Activated CD8-positive, alpha-beta T cell treated with anti-CD3 and anti-CD28 coated beads, Interleukin-2, amount 10 ng/mL, durations not matched to agents 7 days and 5 days (primary cell): ENCODE measurements at regions of chr2 and their contacts with region 1.

Region 1: DNA sequence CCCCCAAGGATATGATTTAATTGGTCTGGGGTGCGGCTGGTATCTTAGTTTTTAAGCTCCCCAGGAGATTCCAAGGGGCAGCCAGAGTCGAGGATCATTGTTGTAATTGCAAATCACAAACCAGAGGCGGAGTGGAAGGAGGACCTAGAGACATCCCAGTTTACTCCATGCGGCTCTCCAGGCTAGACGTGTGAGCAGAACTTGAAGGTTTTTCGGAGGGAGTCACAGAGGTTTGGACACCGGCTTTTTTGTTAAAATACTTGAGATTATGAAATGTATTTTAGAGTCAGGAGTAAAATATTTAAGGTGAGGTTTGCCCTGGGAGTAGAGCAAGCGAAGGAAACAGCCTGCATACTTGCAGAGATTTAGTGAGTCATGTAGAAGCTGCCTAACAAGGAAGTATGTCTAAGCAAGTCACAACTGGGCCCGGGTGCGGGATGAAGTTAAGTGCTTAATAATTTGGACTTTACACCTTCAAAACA is 39.5 kb downstream of the TGOLN2 start:
- DNase-seq: no peak
- ATAC-seq: no peak
- H3K4me3 Mint-ChIP-seq: no peak overlapping the region
- H3K27ac Mint-ChIP-seq: no peak overlapping the region
- H3K4me1 Mint-ChIP-seq: peaks cover 21% of the 10 kb centered on the region
- H3K27me3 Mint-ChIP-seq: no peaks in the 10 kb centered on the region

Region 2: DNA sequence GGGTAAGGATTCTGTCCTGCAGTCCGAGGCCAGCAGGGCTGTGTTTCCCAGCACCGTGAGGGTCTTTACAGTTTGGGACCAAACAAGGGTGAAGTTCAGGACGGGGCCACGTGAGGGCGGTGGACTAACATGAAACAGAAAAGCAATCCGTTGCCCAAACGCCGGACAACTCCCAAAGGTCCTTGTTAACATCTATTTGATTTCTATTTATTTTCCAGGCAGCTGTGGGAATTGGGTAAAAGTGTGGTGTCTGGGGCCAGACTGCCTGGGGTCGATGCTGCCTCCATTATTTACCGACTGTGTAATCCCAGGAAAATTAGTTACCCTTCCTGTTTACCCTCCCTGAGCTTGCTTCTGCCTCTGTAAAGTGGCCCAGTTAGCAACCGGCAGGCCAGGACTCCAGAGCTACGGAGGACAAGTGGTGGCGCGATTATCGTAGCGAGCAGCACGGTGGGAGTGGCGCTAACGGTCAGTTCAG is 221.4 kb before region 1 on chr2:
- CTCF ChIA-PET with region 1: interaction called, 25 read pairs
- POLR2A ChIA-PET with region 1: no interaction called
- DNase-seq: peak; percentile 63
- ATAC-seq: peak; percentile 53
- H3K4me3 Mint-ChIP-seq: no peak overlapping the region
- H3K27ac Mint-ChIP-seq: no peak overlapping the region
- H3K4me1 Mint-ChIP-seq: no peaks in the 10 kb centered on the region
- H3K27me3 Mint-ChIP-seq: peaks cover 25% of the 10 kb centered on the region

Region 3: GRCh38 chr2:85266146-85267041 is 21.9 kb before region 1 on chr2:
- CTCF ChIA-PET with region 1: interaction called, 26 read pairs
- POLR2A ChIA-PET with region 1: no interaction called
- DNase-seq: peak; percentile 80
- ATAC-seq: peak; percentile 81
- H3K4me3 Mint-ChIP-seq: no peak overlapping the region
- H3K27ac Mint-ChIP-seq: no peak overlapping the region
- H3K4me1 Mint-ChIP-seq: no peaks in the 10 kb centered on the region
- H3K27me3 Mint-ChIP-seq: peaks cover 10% of the 10 kb centered on the region

Region 4: GRCh38 chr2:85273738-85274731 is 14.2 kb before region 1 on chr2:
- CTCF ChIA-PET with region 1: interaction called, 12 read pairs
- POLR2A ChIA-PET with region 1: interaction called, 3 read pairs
- DNase-seq: no peak
- ATAC-seq: no peak
- H3K4me3 Mint-ChIP-seq: no peak overlapping the region
- H3K27ac Mint-ChIP-seq: no peak overlapping the region
- H3K4me1 Mint-ChIP-seq: no peaks in the 10 kb centered on the region
- H3K27me3 Mint-ChIP-seq: peaks cover 12% of the 10 kb centered on the region